Posterior cingulate gyrus (tissue), 11 donors: ENCODE measurements at regions of chr17 and their contacts with region 1.

Region 1: GRCh38 chr17:4412933-4413831 is 20.6 kb upstream of the SPNS3 start:
- DNase-seq: peak; percentile 83 to 98 (median 94)

Region 2: GRCh38 chr17:4199818-4200402 is 213.3 kb before region 1 on chr17:
- intact Hi-C with region 1: loop called (anchors 1 kb)
- DNase-seq: peak in 1 of 10 donors; percentile 81

Region 3: DNA sequence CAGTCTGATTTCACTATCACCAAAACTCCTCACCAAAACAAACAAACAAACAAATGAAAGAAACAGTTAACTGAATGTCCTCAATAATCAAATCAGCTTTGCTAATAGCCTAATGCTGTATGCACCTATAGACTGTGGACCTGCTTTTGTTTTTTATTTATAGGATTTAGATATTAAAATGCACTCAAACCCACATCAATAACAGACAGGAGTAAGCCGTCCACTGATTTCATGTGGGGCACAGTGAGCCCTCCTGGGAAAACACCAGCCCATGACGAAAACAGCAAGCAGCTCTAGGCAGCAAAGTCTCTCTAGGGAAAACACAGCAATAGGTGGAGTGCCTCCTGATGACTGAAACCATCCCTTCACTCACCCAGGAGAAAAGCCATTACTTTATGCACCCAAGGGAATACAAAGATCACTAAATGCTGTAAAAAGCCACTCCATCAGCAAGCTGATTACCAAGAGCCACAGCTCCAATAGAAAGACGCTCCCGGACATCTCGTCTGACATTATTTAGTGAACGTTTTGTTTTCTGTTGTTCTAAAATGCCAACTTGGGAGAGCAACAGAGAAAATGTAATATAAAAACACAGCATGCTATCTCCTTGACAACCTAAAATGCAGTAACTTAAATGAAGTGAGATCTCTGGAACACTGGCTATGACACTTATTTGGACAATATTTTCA is 197.2 kb before region 1 on chr17:
- intact Hi-C with region 1: loop called (anchors 1 kb)
- DNase-seq: peak in 1 of 10 donors; percentile 60